ENCODE measurements at regions of chr12 and their contacts with region 1.

Region 1: GRCh38 chr12:54251667-54252284 is 28.1 kb downstream of the CBX5 start:
- DNase-seq: no peak
- H3K4me3 ChIP-seq: no peak overlapping the region
- H3K27ac ChIP-seq: peak overlapping the region in 10 of 59 donors; percentile 5 to 66 (median 24)
- H3K27me3 ChIP-seq: no peaks in the 10 kb centered on the region
- CTCF ChIP-seq: peak; percentile 46 to 81 (median 67)

Region 2: DNA sequence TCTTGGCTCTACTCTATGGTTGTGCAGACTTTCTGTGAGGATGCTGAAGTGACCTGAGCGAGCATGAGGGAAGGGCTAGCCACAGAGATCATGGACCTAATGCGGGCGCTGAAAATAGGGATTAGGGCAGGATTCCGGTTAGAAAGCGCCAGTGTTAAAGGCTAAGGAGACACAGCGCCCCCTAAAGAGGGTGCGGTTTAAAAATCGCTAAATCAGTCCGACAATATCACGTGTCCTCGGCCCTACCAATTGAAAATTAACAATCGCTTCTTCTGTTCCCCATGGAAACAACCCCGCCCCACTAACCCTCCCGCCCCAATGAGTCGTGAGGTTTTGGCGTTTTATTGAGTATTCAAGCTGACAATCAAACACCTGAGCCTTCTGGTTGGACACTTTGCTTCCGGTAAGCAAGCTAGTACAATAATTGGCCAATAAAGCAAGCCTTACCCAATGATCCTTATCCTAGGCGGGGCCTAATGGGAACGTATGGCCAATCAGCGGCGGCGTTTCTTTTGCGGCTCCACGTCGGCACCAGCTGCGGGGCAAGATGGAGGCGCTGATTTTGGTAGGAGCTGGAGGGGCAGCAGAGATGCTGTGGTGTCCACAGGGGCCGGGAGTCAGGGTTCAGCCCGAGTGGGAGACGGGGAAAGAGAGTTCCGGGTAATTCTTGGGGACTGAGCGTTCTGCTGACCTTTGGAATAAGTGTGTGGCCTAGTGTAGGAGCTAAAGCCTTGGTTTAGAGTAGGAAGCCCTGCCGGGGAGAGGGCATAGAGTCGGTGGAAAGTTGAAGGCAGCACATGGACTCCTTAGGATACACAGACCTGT is 73.1 kb after region 1 on chr12 and contains the start of gene COPZ1:
- intact Hi-C with region 1: loop called in 1 of 2 experiments (anchors 2 kb)
- DNase-seq: peak; percentile 91 to 96 (median 94)
- H3K4me3 ChIP-seq: peak within 1 kb of the TSS; percentile 56 to 99 (median 85)
- H3K27ac ChIP-seq: peak within 1 kb of the TSS; percentile 18 to 95 (median 88)
- H3K27me3 ChIP-seq: no peaks in the 10 kb centered on the region
- CTCF ChIP-seq: peak; percentile 68 to 93 (median 84)
- total RNA-seq, gene COPZ1: 56.8 to 104 (median 78.9) TPM

Region 3: GRCh38 chr12:54375259-54375579 is 123.4 kb after region 1 on chr12:
- intact Hi-C with region 1: no loop called
- DNase-seq: no peak
- H3K4me3 ChIP-seq: no peak overlapping the region
- H3K27ac ChIP-seq: peak overlapping the region in 50 of 59 donors; percentile 9 to 82 (median 63)
- H3K27me3 ChIP-seq: no peaks in the 10 kb centered on the region
- CTCF ChIP-seq: no peak

Region 4: GRCh38 chr12:54439521-54440255 is 187.9 kb after region 1 on chr12:
- intact Hi-C with region 1: no loop called
- DNase-seq: peak in 1 of 10 donors; percentile 28
- H3K4me3 ChIP-seq: no peak overlapping the region
- H3K27ac ChIP-seq: peak overlapping the region in 1 of 59 donors; percentile 40
- H3K27me3 ChIP-seq: peaks cover 0 to 5% (median 0%) of the 10 kb centered on the region in 45 donors
- CTCF ChIP-seq: peak; percentile 58 to 90 (median 78)

Measured in dorsolateral prefrontal cortex (tissue), 120 donors.